CD14-positive monocyte (primary cell): ENCODE measurements at regions of chr22 and their contacts with region 1.

Region 1: GRCh38 chr22:40950962-40951794 is at the start of gene RBX1:
- DNase-seq: peak; percentile 96 to 99 (median 99)
- H3K4me3 ChIP-seq: peak within 1 kb of the TSS; percentile 75 to 95 (median 89)
- H3K4me3 Mint-ChIP-seq: peak within 1 kb of the TSS; percentile 98 to 100
- H3K27ac ChIP-seq: peak within 1 kb of the TSS; percentile 97 to 99
- H3K27ac Mint-ChIP-seq: peak within 1 kb of the TSS; percentile 98 to 100 (median 100)
- H3K4me1 ChIP-seq: peaks cover 14 to 22% of the 10 kb centered on the region in 2 donors
- H3K4me1 Mint-ChIP-seq: peaks cover 22% of the 10 kb centered on the region
- H3K27me3 ChIP-seq: no peaks in the 10 kb centered on the region
- H3K27me3 Mint-ChIP-seq: peaks cover 0 to 2% (median 0%) of the 10 kb centered on the region in 3 donors
- CTCF ChIP-seq: no peak
- polyA plus RNA-seq, gene RBX1: 42.7 to 247 (median 224) TPM

Region 2: GRCh38 chr22:40922484-40923303 is 28.5 kb before region 1 on chr22:
- intact Hi-C with region 1: no loop called
- DNase-seq: peak; percentile 56 to 79 (median 68)
- H3K4me3 ChIP-seq: peak overlapping the region in 1 of 3 experiments; percentile 56
- H3K4me3 Mint-ChIP-seq: peak overlapping the region; percentile 67 to 84
- H3K27ac ChIP-seq: peak overlapping the region in 1 of 2 donors; percentile 51
- H3K27ac Mint-ChIP-seq: peak overlapping the region in 5 of 7 donors; percentile 43 to 82 (median 57)
- H3K4me1 ChIP-seq: peaks cover 0 to 3% of the 10 kb centered on the region in 2 donors
- H3K4me1 Mint-ChIP-seq: peaks cover 8% of the 10 kb centered on the region
- H3K27me3 ChIP-seq: no peaks in the 10 kb centered on the region
- H3K27me3 Mint-ChIP-seq: no peaks in the 10 kb centered on the region
- CTCF ChIP-seq: peak; percentile 80

Region 3: GRCh38 chr22:41022470-41023298 is 71.5 kb after region 1 on chr22:
- intact Hi-C with region 1: loop called (anchors 2 to 5 kb)
- DNase-seq: peak; percentile 79 to 86 (median 83)
- H3K4me3 ChIP-seq: peak overlapping the region; percentile 45 to 94 (median 88)
- H3K4me3 Mint-ChIP-seq: peak overlapping the region; percentile 79 to 88
- H3K27ac ChIP-seq: peak overlapping the region; percentile 87 to 95
- H3K27ac Mint-ChIP-seq: peak overlapping the region; percentile 85 to 97 (median 95)
- H3K4me1 ChIP-seq: peaks cover 21 to 31% of the 10 kb centered on the region in 2 donors
- H3K4me1 Mint-ChIP-seq: peaks cover 30% of the 10 kb centered on the region
- H3K27me3 ChIP-seq: no peaks in the 10 kb centered on the region
- H3K27me3 Mint-ChIP-seq: peaks cover 0 to 3% (median 0%) of the 10 kb centered on the region in 3 donors
- CTCF ChIP-seq: no peak

Region 4: GRCh38 chr22:41091132-41092022 is 140.2 kb after region 1 on chr22:
- intact Hi-C with region 1: loop called (anchors 1 kb)
- DNase-seq: peak; percentile 99
- H3K4me3 ChIP-seq: peak overlapping the region; percentile 83 to 91 (median 90)
- H3K4me3 Mint-ChIP-seq: peak overlapping the region; percentile 90 to 96
- H3K27ac ChIP-seq: peak overlapping the region; percentile 96 to 98
- H3K27ac Mint-ChIP-seq: peak overlapping the region; percentile 95 to 100 (median 98)
- H3K4me1 ChIP-seq: peaks cover 27 to 39% of the 10 kb centered on the region in 2 donors
- H3K4me1 Mint-ChIP-seq: peaks cover 39% of the 10 kb centered on the region
- H3K27me3 ChIP-seq: no peaks in the 10 kb centered on the region
- H3K27me3 Mint-ChIP-seq: peaks cover 0 to 3% (median 0%) of the 10 kb centered on the region in 3 donors
- CTCF ChIP-seq: no peak

Region 5: GRCh38 chr22:41204992-41205900 is 254.1 kb after region 1 on chr22 and contains the start of gene L3MBTL2:
- intact Hi-C with region 1: loop called in 1 of 2 experiments (anchors 10 kb)
- DNase-seq: peak; percentile 87 to 97 (median 95)
- H3K4me3 ChIP-seq: peak within 1 kb of the TSS; percentile 73 to 97 (median 90)
- H3K4me3 Mint-ChIP-seq: peak within 1 kb of the TSS; percentile 96 to 98
- H3K27ac ChIP-seq: peak within 1 kb of the TSS; percentile 58 to 92
- H3K27ac Mint-ChIP-seq: peak within 1 kb of the TSS; percentile 90 to 97 (median 95)
- H3K4me1 ChIP-seq: peaks cover 20 to 22% of the 10 kb centered on the region in 2 donors
- H3K4me1 Mint-ChIP-seq: peaks cover 23% of the 10 kb centered on the region
- H3K27me3 ChIP-seq: no peaks in the 10 kb centered on the region
- H3K27me3 Mint-ChIP-seq: peaks cover 0 to 2% (median 1%) of the 10 kb centered on the region in 3 donors
- CTCF ChIP-seq: no peak
- polyA plus RNA-seq, gene L3MBTL2: 13.6 to 15.2 (median 14.0) TPM